ENCODE measurements at regions of chr12 and their contacts with region 1.

Region 1: GRCh38 chr12:52879394-52880351 is 25.2 kb downstream of the KRT8 start:
- DNase-seq: peak; percentile 83
- H3K4me3 ChIP-seq: peak overlapping the region in 1 of 3 experiments; percentile 23
- H3K27ac ChIP-seq: no peak overlapping the region
- H3K4me1 ChIP-seq: peaks cover 2% of the 10 kb centered on the region
- H3K27me3 ChIP-seq: no peaks in the 10 kb centered on the region
- CTCF ChIP-seq: peak; percentile 77 to 99
- POLR2A ChIP-seq: no peak

Region 2: DNA sequence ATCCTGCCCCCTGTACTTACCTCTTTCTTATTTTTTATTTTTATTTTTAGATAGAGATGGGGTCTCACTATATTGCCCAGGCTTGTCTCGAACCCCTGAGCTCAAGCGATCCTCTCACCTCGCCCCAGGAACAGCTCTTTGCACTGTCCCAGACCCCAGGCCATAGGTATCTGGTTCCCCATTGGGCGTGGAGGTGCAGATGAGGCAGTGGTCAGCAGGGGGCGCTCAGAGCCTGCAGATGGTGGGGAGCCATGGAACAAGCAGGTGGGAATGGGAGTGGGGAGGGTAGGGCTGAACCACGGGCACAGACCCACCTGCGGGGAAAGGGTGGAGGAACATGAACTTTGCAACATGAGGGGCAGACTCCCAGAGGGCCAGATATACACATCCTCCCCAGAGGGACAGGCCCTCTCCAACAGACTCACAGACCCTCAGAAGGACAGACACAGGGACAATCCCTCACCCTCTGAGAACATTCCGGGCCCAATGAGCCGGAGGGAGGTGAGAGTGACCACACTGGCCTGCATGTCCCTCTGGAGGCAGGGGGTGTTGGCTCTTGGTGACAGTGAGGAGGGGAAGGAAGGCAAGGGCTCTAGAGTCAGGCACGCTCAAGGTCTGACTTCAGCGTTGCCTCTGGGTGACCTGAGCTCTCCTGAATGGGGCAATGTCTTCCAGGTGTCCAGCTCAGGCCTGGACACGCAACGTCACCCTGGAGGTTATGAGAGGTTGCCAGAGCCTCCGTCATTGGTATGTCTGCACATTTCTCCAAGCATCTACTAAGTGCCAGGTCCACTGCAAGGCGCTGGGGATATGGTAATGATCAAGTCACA is 722.7 kb before region 1 on chr12:
- CTCF ChIA-PET with region 1: interaction called, 25 read pairs
- POLR2A ChIA-PET with region 1: no interaction called
- dilution Hi-C with region 1: no loop called
- intact Hi-C with region 1: loop called (anchors 1 kb)
- DNase-seq: peak; percentile 58
- H3K4me3 ChIP-seq: no peak overlapping the region
- H3K27ac ChIP-seq: no peak overlapping the region
- H3K4me1 ChIP-seq: peaks cover 2% of the 10 kb centered on the region
- H3K27me3 ChIP-seq: no peaks in the 10 kb centered on the region
- CTCF ChIP-seq: peak; percentile 93 to 94
- POLR2A ChIP-seq: no peak

Region 3: GRCh38 chr12:52372216-52373154 is 507.2 kb before region 1 on chr12:
- CTCF ChIA-PET with region 1: interaction called, 126 read pairs
- POLR2A ChIA-PET with region 1: no interaction called
- dilution Hi-C with region 1: no loop called
- intact Hi-C with region 1: loop called (anchors 1 kb)
- DNase-seq: peak; percentile 73
- H3K4me3 ChIP-seq: no peak overlapping the region
- H3K27ac ChIP-seq: no peak overlapping the region
- H3K4me1 ChIP-seq: no peaks in the 10 kb centered on the region
- H3K27me3 ChIP-seq: peaks cover 13 to 19% of the 10 kb centered on the region in 2 experiments
- CTCF ChIP-seq: peak; percentile 69 to 77
- POLR2A ChIP-seq: no peak

Region 4: DNA sequence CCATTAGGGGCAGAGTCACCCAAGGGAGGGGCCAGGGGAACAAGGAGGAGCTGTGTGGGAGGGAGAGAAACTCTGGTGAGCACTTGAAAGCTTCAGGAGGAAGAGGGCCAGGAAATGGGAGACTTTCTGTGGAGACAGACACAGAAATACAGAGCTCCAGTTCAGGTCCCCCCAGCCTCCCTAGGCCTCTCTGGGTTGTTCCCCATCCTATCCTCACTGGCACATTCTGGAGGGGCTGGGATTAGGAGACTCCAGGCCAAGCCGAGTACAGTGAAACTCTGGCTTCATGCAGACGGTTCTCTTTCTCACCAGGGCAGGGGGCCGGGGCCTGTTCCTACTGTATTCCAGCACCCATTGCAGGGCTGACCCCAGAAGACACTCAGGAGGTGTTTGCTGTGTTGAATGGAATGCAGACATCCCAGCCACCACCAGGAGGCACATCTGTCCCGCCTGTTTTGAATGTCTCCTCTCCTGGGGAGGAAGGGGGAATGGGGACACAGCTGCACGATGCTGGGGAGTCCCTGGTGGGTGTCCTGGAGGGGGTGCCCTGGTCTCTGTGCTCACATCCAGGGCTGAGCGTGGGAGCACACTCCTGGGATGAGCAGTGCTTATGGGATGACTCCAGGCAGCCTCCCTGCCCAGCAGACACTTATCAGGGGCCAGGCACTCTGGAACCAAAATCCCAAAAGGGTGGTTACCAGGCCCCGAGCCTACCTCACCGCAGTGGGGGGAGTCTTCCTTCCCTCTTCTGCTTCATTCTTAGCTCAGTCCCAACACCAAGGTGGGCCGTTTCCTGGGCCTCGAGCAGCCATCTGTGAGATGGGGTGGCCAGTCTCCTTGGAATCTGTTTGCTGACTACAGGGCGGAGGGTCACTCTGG is 488.7 kb before region 1 on chr12:
- CTCF ChIA-PET with region 1: interaction called, 11 read pairs
- POLR2A ChIA-PET with region 1: no interaction called
- dilution Hi-C with region 1: no loop called
- intact Hi-C with region 1: loop called (anchors 5 kb)
- DNase-seq: peak; percentile 5
- H3K4me3 ChIP-seq: no peak overlapping the region
- H3K27ac ChIP-seq: no peak overlapping the region
- H3K4me1 ChIP-seq: no peaks in the 10 kb centered on the region
- H3K27me3 ChIP-seq: peaks cover 0 to 4% of the 10 kb centered on the region in 2 experiments
- CTCF ChIP-seq: peak; percentile 38 to 53
- POLR2A ChIP-seq: no peak

Region 5: GRCh38 chr12:52865090-52865944 is 14.4 kb before region 1 on chr12:
- CTCF ChIA-PET with region 1: interaction called, 50 read pairs
- POLR2A ChIA-PET with region 1: interaction called, 4 read pairs
- dilution Hi-C with region 1: no loop called
- intact Hi-C with region 1: no loop called
- DNase-seq: peak; percentile 75
- H3K4me3 ChIP-seq: no peak overlapping the region
- H3K27ac ChIP-seq: no peak overlapping the region
- H3K4me1 ChIP-seq: no peaks in the 10 kb centered on the region
- H3K27me3 ChIP-seq: no peaks in the 10 kb centered on the region
- CTCF ChIP-seq: peak; percentile 85 to 91
- POLR2A ChIP-seq: no peak

Region 6: GRCh38 chr12:52924764-52925716 is 45.4 kb after region 1 on chr12:
- CTCF ChIA-PET with region 1: interaction called, 54 read pairs
- POLR2A ChIA-PET with region 1: no interaction called
- dilution Hi-C with region 1: no loop called
- intact Hi-C with region 1: no loop called
- DNase-seq: peak; percentile 91
- H3K4me3 ChIP-seq: no peak overlapping the region
- H3K27ac ChIP-seq: peak overlapping the region; percentile 96
- H3K4me1 ChIP-seq: peaks cover 42% of the 10 kb centered on the region
- H3K27me3 ChIP-seq: no peaks in the 10 kb centered on the region
- CTCF ChIP-seq: no peak
- POLR2A ChIP-seq: peak; percentile 76

Region 7: DNA sequence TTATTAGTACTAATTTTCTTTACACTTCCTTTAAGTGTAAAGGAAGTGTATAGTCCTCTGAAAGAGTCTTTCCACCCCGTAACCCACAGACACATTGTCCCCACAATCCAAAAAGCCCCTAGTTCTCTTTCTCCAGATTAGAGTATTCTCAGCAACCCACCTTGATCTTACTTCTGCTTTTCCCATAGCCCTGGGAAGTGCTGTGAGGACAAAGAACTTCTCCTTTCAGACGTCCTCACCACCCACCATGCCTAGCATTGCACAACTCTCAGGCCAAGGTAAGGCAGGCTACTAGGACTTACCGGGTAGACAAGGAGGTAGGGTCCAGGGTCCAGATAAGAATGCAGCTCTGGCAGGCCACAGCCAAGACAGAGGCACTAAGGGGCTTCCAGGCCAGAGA is 434.3 kb after region 1 on chr12:
- CTCF ChIA-PET with region 1: no interaction called
- POLR2A ChIA-PET with region 1: no interaction called
- dilution Hi-C with region 1: no loop called
- intact Hi-C with region 1: no loop called
- DNase-seq: no peak
- H3K4me3 ChIP-seq: no peak overlapping the region
- H3K27ac ChIP-seq: no peak overlapping the region
- H3K4me1 ChIP-seq: no peaks in the 10 kb centered on the region
- H3K27me3 ChIP-seq: no peaks in the 10 kb centered on the region
- CTCF ChIP-seq: no peak
- POLR2A ChIP-seq: no peak

Measured in endothelial cell of umbilical vein (primary cell).